SK-N-SH (cell line): ENCODE measurements at regions of chr12 and their contacts with region 1.

Region 1: DNA sequence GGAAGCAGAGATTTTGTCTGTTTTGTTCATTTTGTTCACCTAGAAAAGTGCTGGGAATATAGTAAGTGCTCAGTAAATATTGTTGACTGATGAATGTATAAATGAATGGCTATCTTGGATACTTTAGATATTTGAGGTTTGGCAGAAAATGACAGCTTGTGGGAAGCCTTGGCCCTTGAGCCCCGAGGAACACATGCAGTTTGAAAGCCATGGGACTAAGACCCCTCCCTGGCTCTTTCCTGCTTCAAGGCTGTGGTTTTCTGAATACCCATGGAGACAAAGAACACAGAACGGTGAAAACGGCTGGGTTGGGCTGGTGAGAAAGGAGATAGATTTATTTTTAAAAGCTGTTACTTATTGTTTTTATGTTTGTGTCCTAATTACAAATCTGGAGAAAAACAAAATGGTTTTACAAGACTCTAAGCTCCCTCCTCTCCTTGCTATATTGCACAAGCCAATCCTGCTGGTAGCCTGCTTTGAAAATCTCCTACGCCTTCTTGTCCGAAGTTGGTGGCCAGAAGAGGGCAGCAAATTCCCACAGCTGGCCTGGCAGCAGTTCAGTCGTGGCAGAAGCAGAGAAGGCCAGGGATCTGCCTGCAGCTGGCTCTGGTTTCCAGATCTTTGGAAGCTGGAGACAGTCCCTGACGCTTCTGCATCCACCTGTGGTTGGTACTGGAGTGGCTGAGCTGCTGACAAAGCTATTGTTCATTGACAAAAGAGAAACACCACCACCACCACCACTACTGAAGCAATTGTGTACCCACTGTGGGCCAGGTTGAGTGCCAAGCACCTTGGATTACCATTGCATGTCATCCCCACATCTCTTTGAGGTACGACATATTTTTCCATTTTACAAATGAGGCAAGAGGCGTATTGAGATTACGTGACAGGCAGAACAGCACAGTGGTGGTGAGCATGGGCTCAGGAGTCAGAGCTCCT is 5.2 kb upstream of the KRT85 start:
- DNase-seq: peak; percentile 87
- H3K4me3 ChIP-seq: peak overlapping the region in 1 of 2 experiments; percentile 43; a peak in 1 of 4 replicates
- H3K27ac ChIP-seq: no peak overlapping the region
- H3K4me1 ChIP-seq: no peaks in the 10 kb centered on the region
- H3K27me3 ChIP-seq: peaks cover 48% of the 10 kb centered on the region
- CTCF ChIP-seq: peak; percentile 81
- EP300 ChIP-seq: no peak
- RAD21 ChIP-seq: peak; percentile 94

Region 2: DNA sequence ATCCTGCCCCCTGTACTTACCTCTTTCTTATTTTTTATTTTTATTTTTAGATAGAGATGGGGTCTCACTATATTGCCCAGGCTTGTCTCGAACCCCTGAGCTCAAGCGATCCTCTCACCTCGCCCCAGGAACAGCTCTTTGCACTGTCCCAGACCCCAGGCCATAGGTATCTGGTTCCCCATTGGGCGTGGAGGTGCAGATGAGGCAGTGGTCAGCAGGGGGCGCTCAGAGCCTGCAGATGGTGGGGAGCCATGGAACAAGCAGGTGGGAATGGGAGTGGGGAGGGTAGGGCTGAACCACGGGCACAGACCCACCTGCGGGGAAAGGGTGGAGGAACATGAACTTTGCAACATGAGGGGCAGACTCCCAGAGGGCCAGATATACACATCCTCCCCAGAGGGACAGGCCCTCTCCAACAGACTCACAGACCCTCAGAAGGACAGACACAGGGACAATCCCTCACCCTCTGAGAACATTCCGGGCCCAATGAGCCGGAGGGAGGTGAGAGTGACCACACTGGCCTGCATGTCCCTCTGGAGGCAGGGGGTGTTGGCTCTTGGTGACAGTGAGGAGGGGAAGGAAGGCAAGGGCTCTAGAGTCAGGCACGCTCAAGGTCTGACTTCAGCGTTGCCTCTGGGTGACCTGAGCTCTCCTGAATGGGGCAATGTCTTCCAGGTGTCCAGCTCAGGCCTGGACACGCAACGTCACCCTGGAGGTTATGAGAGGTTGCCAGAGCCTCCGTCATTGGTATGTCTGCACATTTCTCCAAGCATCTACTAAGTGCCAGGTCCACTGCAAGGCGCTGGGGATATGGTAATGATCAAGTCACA is 215.5 kb before region 1 on chr12:
- CTCF ChIA-PET with region 1: interaction called, 10 read pairs
- POLR2A ChIA-PET with region 1: no interaction called
- DNase-seq: peak; percentile 92
- H3K4me3 ChIP-seq: no peak overlapping the region; a peak in 1 of 4 replicates
- H3K27ac ChIP-seq: no peak overlapping the region
- H3K4me1 ChIP-seq: no peaks in the 10 kb centered on the region
- H3K27me3 ChIP-seq: no peaks in the 10 kb centered on the region
- CTCF ChIP-seq: peak; percentile 98
- EP300 ChIP-seq: no peak
- RAD21 ChIP-seq: peak; percentile 99

Region 3: GRCh38 chr12:52344137-52344536 is 28.3 kb before region 1 on chr12:
- CTCF ChIA-PET with region 1: interaction called, 12 read pairs
- POLR2A ChIA-PET with region 1: no interaction called
- DNase-seq: no peak
- H3K4me3 ChIP-seq: no peak overlapping the region
- H3K27ac ChIP-seq: no peak overlapping the region
- H3K4me1 ChIP-seq: no peaks in the 10 kb centered on the region
- H3K27me3 ChIP-seq: peaks cover 29% of the 10 kb centered on the region
- CTCF ChIP-seq: no peak
- EP300 ChIP-seq: no peak
- RAD21 ChIP-seq: no peak

Region 4: GRCh38 chr12:52351196-52352059 is 21.1 kb before region 1 on chr12:
- CTCF ChIA-PET with region 1: interaction called, 18 read pairs
- POLR2A ChIA-PET with region 1: no interaction called
- DNase-seq: no peak
- H3K4me3 ChIP-seq: no peak overlapping the region
- H3K27ac ChIP-seq: no peak overlapping the region
- H3K4me1 ChIP-seq: no peaks in the 10 kb centered on the region; a peak in 1 of 4 replicates
- H3K27me3 ChIP-seq: peaks cover 40% of the 10 kb centered on the region
- CTCF ChIP-seq: no peak
- EP300 ChIP-seq: no peak
- RAD21 ChIP-seq: no peak

Region 5: DNA sequence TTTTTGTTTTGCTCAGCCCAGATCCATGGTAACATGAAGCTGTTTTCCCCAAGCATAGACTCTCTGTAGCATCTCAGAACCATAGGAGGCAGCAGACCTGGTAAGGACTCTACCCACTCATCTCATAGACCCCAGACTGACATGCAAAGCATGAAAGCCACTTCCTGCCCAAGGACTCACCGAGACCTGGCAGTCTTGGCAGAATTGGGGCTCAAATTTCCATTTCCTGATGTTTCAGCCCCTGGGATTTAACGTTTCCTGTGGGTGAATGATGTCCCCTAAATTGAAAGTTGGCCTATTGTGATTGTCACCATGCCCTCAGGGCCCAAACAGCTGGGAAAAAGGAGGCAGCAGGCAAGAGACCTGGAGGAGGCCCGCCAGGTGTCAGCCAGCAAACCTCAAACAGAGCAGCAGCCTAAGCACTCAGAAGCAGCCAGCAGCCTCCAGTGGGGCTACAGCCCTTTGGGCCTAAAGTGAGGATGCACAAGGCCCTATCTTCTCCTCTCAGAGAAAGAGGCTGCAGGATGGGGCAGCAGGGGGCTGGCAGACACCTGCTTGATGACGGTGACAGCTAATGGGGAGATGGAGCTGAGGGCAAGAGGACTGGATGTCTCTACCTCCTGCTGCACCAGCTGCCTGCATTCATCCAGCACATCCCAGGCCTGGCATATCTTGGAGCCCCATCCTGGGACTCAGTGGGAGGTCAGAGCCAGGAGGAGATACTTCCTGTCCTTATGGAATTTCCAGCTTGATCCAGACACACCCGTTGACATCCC is 13.7 kb before region 1 on chr12:
- CTCF ChIA-PET with region 1: interaction called, 35 read pairs
- POLR2A ChIA-PET with region 1: no interaction called
- DNase-seq: no peak
- H3K4me3 ChIP-seq: no peak overlapping the region
- H3K27ac ChIP-seq: no peak overlapping the region
- H3K4me1 ChIP-seq: no peaks in the 10 kb centered on the region; a peak in 1 of 4 replicates
- H3K27me3 ChIP-seq: peaks cover 22% of the 10 kb centered on the region; the same call in 1 of the 2 replicates
- CTCF ChIP-seq: no peak
- EP300 ChIP-seq: no peak
- RAD21 ChIP-seq: no peak

Region 6: DNA sequence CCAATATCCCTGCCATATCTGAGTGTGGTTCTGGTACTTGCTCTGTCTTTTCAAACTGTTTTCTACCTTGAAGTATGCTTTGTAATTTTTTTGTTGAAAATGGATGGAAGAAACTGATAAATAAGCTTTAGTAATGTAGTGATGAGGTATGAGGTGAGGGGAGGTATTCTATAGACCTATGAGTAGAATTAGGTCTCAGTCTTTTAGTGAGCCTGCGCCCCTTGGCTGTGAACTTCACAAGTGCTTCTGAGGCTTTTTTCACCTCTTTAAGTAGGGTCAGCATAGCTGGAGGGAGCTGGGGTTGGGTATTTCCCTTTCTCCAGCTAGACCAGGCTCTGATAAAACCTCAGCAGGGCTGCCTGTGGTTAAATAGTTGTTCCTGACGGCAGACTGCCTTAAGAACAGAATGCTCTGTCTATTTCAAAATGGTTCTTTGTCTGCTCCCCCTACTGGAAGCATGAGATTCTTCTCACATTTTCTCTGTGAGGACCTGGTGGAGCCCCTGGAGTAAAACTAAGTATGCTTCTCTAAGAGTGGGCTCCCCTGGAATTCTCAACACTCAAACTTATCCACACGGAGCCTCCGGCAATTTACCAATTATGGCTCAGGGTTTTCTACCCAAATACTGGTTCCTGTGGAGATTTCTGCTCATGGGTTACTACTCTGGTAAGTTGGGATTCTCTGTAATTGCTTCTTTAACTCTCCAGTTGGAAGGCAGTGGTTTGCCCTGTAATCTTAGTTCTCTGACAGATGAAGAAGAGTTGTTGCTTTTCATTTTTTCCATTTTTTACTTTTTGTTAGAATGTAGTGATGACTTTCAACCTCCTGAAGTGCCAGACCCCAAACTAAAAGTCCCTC is 134.6 kb after region 1 on chr12:
- CTCF ChIA-PET with region 1: interaction called, 15 read pairs
- POLR2A ChIA-PET with region 1: no interaction called
- DNase-seq: peak; percentile 49
- H3K4me3 ChIP-seq: no peak overlapping the region
- H3K27ac ChIP-seq: no peak overlapping the region
- H3K4me1 ChIP-seq: no peaks in the 10 kb centered on the region
- H3K27me3 ChIP-seq: peaks cover 5% of the 10 kb centered on the region; the same call in 1 of the 2 replicates
- CTCF ChIP-seq: peak; percentile 61
- EP300 ChIP-seq: no peak
- RAD21 ChIP-seq: peak; percentile 48

Region 7: DNA sequence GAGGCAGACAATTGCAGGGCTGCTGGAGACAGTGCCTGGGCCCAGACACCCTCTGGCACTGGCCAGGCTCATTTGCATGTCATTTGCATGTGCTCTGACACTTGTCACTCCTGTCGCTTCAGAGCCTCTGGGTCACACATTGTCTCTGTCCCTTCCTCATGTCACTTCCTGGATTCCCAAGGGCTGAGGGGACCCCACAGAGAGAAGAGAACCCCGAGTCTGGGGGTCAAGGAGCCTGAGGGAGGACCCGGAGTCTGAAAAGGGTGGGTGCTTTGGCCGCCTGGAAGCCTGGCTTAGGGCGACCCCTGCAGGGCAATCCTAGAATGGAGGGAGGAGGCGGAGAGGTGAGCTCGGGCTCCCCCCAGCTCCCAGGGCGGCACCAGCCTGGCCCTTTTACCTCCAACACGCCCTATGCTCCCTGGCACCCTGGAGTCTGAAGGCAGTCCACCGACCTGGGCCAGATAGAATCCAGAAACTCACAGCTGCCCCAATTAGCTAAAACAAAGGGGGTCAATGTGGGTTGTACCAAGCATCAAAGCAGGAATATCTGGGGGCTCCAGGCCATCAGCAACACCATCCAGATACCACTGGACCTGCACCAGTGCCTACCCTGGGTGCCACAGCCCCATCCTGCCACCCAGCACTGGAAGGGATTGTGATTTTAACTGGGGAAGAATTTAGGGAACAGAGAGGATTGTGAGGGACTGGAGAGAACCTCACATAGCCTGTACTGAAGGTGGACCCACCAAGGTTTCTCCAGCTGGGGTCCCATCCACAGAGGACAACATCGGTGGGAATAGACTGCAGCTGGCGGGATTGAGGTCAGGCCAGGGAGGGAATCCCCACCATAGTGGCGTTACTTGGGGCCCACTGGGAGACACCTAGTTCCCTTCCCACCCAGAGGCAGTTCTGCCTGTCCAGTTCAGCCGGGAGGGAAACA is 498.1 kb after region 1 on chr12:
- CTCF ChIA-PET with region 1: interaction called, 20 read pairs
- POLR2A ChIA-PET with region 1: no interaction called
- DNase-seq: peak; percentile 84
- H3K4me3 ChIP-seq: no peak overlapping the region; a peak in 1 of 4 replicates
- H3K27ac ChIP-seq: peak overlapping the region in 1 of 2 experiments; percentile 69; a peak in 2 of 4 replicates
- H3K4me1 ChIP-seq: peaks cover 10 to 18% of the 10 kb centered on the region in 2 experiments; a peak in 3 of 4 replicates
- H3K27me3 ChIP-seq: no peaks in the 10 kb centered on the region
- CTCF ChIP-seq: peak; percentile 85
- EP300 ChIP-seq: no peak
- RAD21 ChIP-seq: peak; percentile 71